OCI-LY7 (cell line): ENCODE measurements at regions of chr2 and their contacts with region 1.

Region 1: GRCh38 chr2:233029321-233029720 is 3.2 kb upstream of the NEU2 start:
- DNase-seq: no peak
- H3K4me3 ChIP-seq: no peak overlapping the region
- H3K27ac ChIP-seq: no peak overlapping the region
- H3K4me1 ChIP-seq: no peaks in the 10 kb centered on the region
- CTCF ChIP-seq: no peak

Region 2: GRCh38 chr2:232854082-232854481 is 175.2 kb before region 1 on chr2:
- CTCF ChIA-PET with region 1: no interaction called
- POLR2A ChIA-PET with region 1: no interaction called
- intact Hi-C with region 1: loop called (anchors 1 kb)
- DNase-seq: no peak
- H3K4me3 ChIP-seq: no peak overlapping the region
- H3K27ac ChIP-seq: no peak overlapping the region
- H3K4me1 ChIP-seq: no peaks in the 10 kb centered on the region
- CTCF ChIP-seq: no peak

Region 3: DNA sequence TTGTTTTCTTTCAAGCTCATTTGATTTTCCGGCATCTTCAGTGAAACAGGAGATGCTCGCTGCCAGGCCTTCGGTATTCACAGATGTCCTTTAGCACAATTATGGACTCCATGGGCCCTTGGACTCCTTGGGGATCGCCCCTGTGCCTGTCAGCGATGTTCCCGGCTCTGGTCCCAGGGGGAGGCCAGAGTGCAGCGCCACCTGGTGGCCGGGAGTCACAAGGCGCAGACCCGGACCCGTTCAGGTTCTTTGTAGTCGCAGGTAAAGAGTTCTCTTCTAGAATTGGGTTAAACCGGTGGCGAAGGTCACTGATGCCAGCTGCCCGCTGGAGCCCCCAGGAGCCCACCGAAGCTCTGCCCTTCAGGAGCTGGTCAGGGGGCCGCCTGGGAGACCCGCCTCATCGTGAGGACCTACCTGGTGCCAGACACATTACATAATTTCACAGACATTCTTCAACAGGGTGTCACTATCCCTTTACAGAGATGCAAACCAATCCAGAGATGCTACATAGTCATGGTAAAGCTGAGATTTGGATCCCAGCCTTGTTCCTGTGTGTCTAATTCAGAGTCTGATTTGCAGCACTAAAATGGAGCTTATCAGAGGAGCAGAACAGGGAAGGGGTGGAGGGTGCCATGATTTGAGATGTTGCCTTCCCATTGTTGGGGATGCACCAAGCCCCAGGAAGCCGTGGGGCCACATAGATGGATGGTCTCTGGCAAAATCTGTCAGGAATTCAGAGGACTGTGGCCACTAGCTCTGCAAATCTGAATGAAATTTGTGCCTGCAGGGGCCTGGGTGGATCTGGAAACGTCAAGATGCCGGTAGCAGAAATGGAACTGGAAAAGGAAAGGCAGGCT is 24.8 kb after region 1 on chr2:
- CTCF ChIA-PET with region 1: no interaction called
- POLR2A ChIA-PET with region 1: no interaction called
- intact Hi-C with region 1: no loop called
- DNase-seq: peak; percentile 74
- H3K4me3 ChIP-seq: no peak overlapping the region
- H3K27ac ChIP-seq: no peak overlapping the region
- H3K4me1 ChIP-seq: no peaks in the 10 kb centered on the region
- CTCF ChIP-seq: peak; percentile 99

Region 4: DNA sequence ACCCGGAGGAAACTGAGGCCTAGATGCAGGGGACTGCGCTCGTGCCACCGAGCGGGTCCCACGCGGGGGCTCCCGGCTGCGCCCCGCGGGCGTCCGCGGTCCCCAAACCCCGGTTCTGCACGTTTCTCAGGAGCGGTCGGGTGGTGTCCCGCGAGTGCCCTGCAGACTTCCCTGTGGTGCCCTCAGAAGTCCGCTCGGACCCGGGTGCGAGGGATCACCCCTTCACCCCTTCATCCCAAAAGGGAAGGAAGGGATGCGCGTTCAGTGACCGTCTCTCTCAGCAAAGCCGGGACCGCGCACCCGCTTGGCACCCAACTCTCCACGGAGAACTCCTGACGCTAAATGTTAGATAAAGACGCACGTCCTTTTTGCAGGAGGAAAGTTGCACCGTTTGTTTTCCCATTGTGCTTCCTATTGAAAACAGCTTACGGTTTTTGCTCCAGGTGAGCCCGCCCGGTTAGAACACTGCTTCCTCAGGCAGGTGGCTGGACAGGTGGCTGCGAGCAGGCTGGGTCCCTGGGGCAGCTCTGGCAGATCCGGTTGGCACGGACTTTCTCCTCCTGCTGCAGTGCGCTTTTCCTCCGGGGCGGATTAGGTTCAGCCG is 325.8 kb after region 1 on chr2:
- CTCF ChIA-PET with region 1: no interaction called
- POLR2A ChIA-PET with region 1: no interaction called
- intact Hi-C with region 1: no loop called
- DNase-seq: peak; percentile 53
- H3K4me3 ChIP-seq: peak overlapping the region; percentile 88
- H3K27ac ChIP-seq: peak overlapping the region; percentile 62
- H3K4me1 ChIP-seq: peaks cover 62% of the 10 kb centered on the region
- CTCF ChIP-seq: no peak

Region 5: GRCh38 chr2:233426619-233427342 is 397.5 kb after region 1 on chr2:
- CTCF ChIA-PET with region 1: no interaction called
- POLR2A ChIA-PET with region 1: no interaction called
- intact Hi-C with region 1: no loop called
- DNase-seq: no peak
- H3K4me3 ChIP-seq: no peak overlapping the region
- H3K27ac ChIP-seq: no peak overlapping the region
- H3K4me1 ChIP-seq: peaks cover 12% of the 10 kb centered on the region
- CTCF ChIP-seq: no peak